ENCODE measurements at regions of chr3 and their contacts with region 1.

Region 1: DNA sequence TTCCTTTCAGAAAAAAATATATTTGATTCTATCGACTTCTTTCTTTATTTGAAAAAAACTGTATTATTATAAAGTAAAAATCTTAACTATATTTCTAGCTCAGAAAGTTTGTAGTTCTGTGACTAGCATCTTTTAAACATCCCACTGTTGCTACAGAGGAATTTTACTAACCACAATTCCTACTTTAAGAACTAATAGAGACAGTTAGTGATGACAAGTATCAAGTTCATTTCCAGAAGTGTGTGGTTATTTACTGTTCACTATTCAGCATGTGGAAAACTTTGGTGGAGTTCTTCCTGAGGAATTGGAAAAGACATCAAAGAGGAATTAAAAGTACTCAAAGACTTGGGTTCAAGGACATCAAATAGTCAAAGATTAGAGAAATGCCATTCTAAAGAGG is 524.1 kb upstream of the CBLB start:
- DNase-seq: no peak
- H3K27ac ChIP-seq: no peak overlapping the region
- CTCF ChIP-seq: no peak

Region 2: DNA sequence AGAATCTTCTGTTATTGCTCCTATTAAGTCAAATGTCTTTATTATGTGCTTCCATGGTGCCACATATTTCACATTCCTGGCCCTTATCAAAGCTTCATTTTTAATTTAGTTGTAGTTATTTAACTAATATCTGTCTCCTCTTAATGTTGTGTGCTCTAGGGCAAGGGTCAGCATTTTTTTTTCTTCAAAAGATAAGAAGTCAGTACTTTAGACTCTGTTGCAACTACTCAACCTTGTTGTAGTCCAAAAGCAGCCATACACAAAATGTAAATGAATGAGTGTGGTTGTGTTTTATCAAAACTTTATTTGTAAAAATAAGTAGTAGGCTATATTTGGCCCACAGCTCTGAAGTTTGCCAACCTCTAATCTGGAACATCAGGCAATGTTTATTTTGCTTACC is 129.4 kb before region 1 on chr3:
- CTCF ChIA-PET with region 1: no interaction called
- POLR2A ChIA-PET with region 1: no interaction called
- DNase-seq: no peak
- H3K27ac ChIP-seq: no peak overlapping the region
- CTCF ChIP-seq: no peak

Region 3: GRCh38 chr3:106629215-106629832 is 236.4 kb after region 1 on chr3:
- CTCF ChIA-PET with region 1: no interaction called
- POLR2A ChIA-PET with region 1: no interaction called
- DNase-seq: no peak
- H3K27ac ChIP-seq: no peak overlapping the region
- CTCF ChIP-seq: no peak

Region 4: DNA sequence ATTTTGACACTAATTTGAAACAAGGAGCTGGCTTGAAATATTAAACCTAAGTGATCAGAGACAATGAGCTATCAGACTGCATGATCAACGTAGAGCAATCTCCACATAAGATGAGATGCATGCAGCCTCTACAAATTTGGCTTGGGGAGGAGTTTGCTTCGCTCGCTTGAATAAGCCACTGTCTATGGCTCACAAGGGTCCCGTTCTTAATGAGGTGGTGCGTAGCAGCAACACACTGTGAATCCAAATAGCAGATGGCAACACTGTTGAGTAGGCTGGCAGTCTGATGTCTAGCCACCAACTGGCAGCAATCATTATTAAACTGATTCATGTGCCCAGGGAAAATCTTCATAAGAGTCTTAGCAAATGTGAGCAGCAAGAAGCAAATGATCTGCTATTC is 858.9 kb after region 1 on chr3:
- CTCF ChIA-PET with region 1: interaction called, 10 read pairs
- POLR2A ChIA-PET with region 1: no interaction called
- DNase-seq: no peak
- H3K27ac ChIP-seq: no peak overlapping the region
- CTCF ChIP-seq: no peak